Caco-2 (cell line): ENCODE measurements at regions of chr11 and their contacts with region 1.

Region 1: GRCh38 chr11:77127232-77127911 is 674 bp upstream of the MYO7A start:
- DNase-seq: peak; percentile 70 to 84
- H3K4me3 ChIP-seq: peak overlapping the region; percentile 47
- H3K4me3 Mint-ChIP-seq: peak overlapping the region; percentile 69
- H3K27ac Mint-ChIP-seq: peak overlapping the region; percentile 72
- H3K4me1 ChIP-seq: peaks cover 10% of the 10 kb centered on the region
- H3K4me1 Mint-ChIP-seq: peaks cover 19% of the 10 kb centered on the region
- H3K27me3 ChIP-seq: no peaks in the 10 kb centered on the region
- H3K27me3 Mint-ChIP-seq: no peaks in the 10 kb centered on the region
- CTCF ChIP-seq: peak; percentile 100

Region 2: DNA sequence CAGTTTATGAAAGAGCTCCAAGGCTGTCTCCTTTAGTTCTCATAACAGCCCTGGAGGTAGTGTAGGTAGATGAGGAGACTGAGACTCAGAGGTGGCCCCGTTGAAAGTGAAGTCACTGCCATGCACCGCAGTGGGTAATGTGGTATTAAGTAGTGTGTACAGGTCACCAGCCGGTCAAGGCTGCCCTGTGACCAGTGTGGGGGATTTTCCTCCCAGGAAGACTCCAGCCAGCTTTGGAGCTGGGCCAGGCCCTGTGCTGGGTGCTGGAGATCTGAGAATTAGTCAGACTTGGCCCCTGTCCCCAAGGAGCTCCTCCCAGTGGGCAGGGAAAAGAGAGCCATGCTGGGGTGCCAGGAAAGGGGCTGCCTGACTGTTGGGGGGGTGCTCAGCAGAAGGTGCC is 19.4 kb before region 1 on chr11:
- CTCF ChIA-PET with region 1: interaction called, 12 read pairs
- POLR2A ChIA-PET with region 1: no interaction called
- intact Hi-C with region 1: no loop called
- DNase-seq: no peak
- H3K4me3 ChIP-seq: no peak overlapping the region
- H3K4me3 Mint-ChIP-seq: no peak overlapping the region
- H3K27ac Mint-ChIP-seq: no peak overlapping the region
- H3K4me1 ChIP-seq: no peaks in the 10 kb centered on the region
- H3K4me1 Mint-ChIP-seq: peaks cover 7% of the 10 kb centered on the region
- H3K27me3 ChIP-seq: no peaks in the 10 kb centered on the region
- H3K27me3 Mint-ChIP-seq: no peaks in the 10 kb centered on the region
- CTCF ChIP-seq: no peak

Region 3: GRCh38 chr11:77175021-77175842 is 47.9 kb after region 1 on chr11:
- CTCF ChIA-PET with region 1: interaction called, 35 read pairs
- POLR2A ChIA-PET with region 1: interaction called, 3 read pairs
- intact Hi-C with region 1: loop called (anchors 5 kb)
- DNase-seq: no peak
- H3K4me3 ChIP-seq: no peak overlapping the region
- H3K4me3 Mint-ChIP-seq: no peak overlapping the region
- H3K27ac Mint-ChIP-seq: no peak overlapping the region
- H3K4me1 ChIP-seq: peaks cover 29% of the 10 kb centered on the region
- H3K4me1 Mint-ChIP-seq: peaks cover 23% of the 10 kb centered on the region
- H3K27me3 ChIP-seq: no peaks in the 10 kb centered on the region
- H3K27me3 Mint-ChIP-seq: no peaks in the 10 kb centered on the region
- CTCF ChIP-seq: no peak

Region 4: DNA sequence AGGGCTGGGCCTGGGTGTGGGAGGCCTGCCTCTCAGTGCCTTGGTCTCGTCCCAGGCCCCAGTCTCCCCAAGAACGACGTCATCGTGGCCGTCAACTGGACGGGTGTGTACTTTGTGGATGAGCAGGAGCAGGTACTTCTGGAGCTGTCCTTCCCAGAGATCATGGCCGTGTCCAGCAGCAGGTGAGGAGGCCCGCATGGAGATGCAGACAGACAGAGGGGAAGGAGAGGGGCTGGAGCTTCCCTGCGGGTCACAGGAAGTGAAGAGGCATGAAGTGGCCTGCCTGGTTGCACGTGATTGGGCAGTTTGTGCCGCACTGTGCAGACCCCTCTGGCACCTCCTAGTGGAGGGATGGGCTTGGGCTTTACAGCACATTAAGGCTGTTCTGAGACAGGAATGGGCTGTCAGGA is 71.1 kb after region 1 on chr11:
- CTCF ChIA-PET with region 1: interaction called, 17 read pairs
- POLR2A ChIA-PET with region 1: no interaction called
- intact Hi-C with region 1: no loop called
- DNase-seq: peak; percentile 68 to 70
- H3K4me3 ChIP-seq: no peak overlapping the region
- H3K4me3 Mint-ChIP-seq: no peak overlapping the region
- H3K27ac Mint-ChIP-seq: no peak overlapping the region
- H3K4me1 ChIP-seq: no peaks in the 10 kb centered on the region
- H3K4me1 Mint-ChIP-seq: no peaks in the 10 kb centered on the region
- H3K27me3 ChIP-seq: no peaks in the 10 kb centered on the region
- H3K27me3 Mint-ChIP-seq: no peaks in the 10 kb centered on the region
- CTCF ChIP-seq: peak; percentile 53 to 72

Region 5: DNA sequence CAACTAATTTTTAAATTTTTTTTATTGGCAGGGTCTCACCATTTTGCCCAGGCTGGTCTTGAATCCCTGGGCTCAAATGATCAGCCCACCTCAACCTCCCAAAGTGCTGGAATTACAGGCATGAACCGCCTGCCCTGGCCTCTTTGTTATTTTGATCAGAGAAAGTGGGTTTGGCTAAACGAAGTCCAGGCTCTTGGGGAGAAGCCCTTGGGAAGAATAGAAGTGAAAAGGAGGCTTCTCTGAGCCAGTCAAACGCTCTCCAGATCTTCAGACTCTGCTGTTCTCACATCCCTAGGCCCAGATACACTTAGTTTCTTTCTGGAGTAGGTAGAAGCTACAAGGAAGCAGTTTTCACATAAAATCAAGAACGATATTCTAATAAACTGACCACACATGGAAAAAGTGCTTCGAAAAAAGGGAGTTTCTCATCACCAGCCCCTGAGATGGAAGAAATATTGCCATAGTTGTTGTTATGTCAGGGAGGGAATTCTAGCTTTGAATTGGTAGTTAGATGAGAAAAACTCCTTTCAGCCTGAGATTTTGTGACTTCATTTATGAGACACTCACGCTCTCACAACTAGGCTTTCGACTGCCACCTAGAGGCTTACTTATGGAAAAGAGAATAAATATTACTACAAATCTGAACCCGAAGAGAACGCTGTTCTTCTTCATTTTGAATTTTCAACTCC is 420.6 kb after region 1 on chr11:
- CTCF ChIA-PET with region 1: interaction called, 13 read pairs
- POLR2A ChIA-PET with region 1: no interaction called
- intact Hi-C with region 1: loop called (anchors 5 kb)
- DNase-seq: peak; percentile 62 to 75
- H3K4me3 ChIP-seq: no peak overlapping the region
- H3K4me3 Mint-ChIP-seq: no peak overlapping the region
- H3K27ac Mint-ChIP-seq: no peak overlapping the region
- H3K4me1 ChIP-seq: peaks cover 3% of the 10 kb centered on the region; the same call in 1 of the 2 replicates
- H3K4me1 Mint-ChIP-seq: peaks cover 6% of the 10 kb centered on the region
- H3K27me3 ChIP-seq: no peaks in the 10 kb centered on the region
- H3K27me3 Mint-ChIP-seq: no peaks in the 10 kb centered on the region
- CTCF ChIP-seq: peak; percentile 73 to 74